ENCODE measurements at regions of chr4 and their contacts with region 1.

Region 1: GRCh38 chr4:185104733-185105132 is 38.3 kb upstream of the SLC25A4 start:
- DNase-seq: no peak
- ATAC-seq: no peak
- H3K4me3 ChIP-seq: no peak overlapping the region
- H3K27ac ChIP-seq: no peak overlapping the region
- H3K4me1 ChIP-seq: peaks cover 0 to 4% (median 0%) of the 10 kb centered on the region in 12 donors
- H3K27me3 ChIP-seq: no peaks in the 10 kb centered on the region
- CTCF ChIP-seq: no peak
- POLR2A ChIP-seq: no peak

Region 2: DNA sequence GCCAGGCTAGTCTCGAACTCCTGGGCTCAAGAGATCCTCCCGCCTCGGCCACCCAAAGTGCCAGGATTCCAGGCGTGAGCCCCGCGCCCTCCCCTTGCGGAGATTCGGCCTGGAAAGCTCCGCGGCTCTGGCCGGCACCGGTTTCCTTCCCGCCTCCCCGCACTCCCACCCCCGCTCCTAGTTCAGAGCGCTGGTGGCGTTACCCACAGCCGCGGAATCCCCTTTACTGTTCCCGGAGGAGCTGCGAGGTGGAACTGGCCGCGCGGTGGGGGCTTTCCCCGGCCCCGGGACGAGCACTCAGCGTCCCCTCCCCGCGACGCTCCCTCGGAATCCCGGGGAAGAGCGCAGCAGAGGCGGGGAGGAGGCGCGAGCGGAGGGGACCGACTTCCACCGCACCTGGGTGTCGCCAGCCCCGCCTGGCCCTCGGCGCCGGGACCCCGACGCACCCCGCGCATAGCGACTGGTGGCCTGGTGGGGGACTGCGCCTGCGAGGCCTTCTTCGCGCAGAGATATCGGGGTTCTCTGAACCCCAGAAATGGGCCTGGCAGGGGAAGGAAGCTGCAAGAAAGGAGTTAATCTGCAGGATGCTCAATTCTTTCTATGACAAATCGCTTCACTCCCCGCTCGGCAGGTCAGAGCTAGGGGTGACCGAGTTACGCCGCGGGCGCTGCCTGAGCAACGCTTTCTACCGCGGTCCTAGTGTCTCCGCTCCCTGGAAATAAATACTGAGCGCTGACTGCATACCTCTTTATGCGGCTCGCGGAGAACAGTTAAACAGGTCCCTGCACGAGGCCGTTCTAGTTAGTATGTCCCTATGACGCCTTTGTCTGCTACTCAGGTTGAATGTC is 23.8 kb after region 1 on chr4:
- intact Hi-C with region 1: loop called in 6 of 10 experiments (anchors 2 to 5 kb)
- DNase-seq: peak in 4 of 5 donors; percentile 37 to 69 (median 40)
- ATAC-seq: peak; percentile 66 to 76 (median 72)
- H3K4me3 ChIP-seq: peak overlapping the region; percentile 54 to 78 (median 66)
- H3K27ac ChIP-seq: peak overlapping the region; percentile 81 to 97 (median 88)
- H3K4me1 ChIP-seq: peaks cover 0 to 19% (median 8%) of the 10 kb centered on the region in 12 donors
- H3K27me3 ChIP-seq: peaks cover 0 to 30% (median 0%) of the 10 kb centered on the region in 9 donors
- CTCF ChIP-seq: peak in 3 of 12 donors; percentile 10 to 18 (median 16)
- POLR2A ChIP-seq: peak in 1 of 2 donors; percentile 19

Measured in heart left ventricle (tissue), 16 donors.